Esophagus squamous epithelium (tissue), 5 donors: ENCODE measurements at regions of chr7 and their contacts with region 1.

Region 1: GRCh38 chr7:30406664-30407425 is 71.7 kb downstream of the NOD1 start:
- DNase-seq: no peak
- H3K4me3 ChIP-seq: no peak overlapping the region
- H3K27ac ChIP-seq: peak overlapping the region; percentile 50 to 78 (median 60)
- H3K4me1 ChIP-seq: peaks cover 0 to 28% (median 0%) of the 10 kb centered on the region in 3 donors
- H3K27me3 ChIP-seq: no peaks in the 10 kb centered on the region
- CTCF ChIP-seq: no peak
- POLR2A ChIP-seq: no peak

Region 2: GRCh38 chr7:30285536-30286284 is 121.1 kb before region 1 on chr7:
- intact Hi-C with region 1: loop called (anchors 10 kb)
- DNase-seq: no peak
- H3K4me3 ChIP-seq: peak overlapping the region; percentile 89 to 96 (median 92)
- H3K27ac ChIP-seq: peak overlapping the region; percentile 90 to 100 (median 100)
- H3K4me1 ChIP-seq: peaks cover 5 to 74% (median 28%) of the 10 kb centered on the region in 3 donors
- H3K27me3 ChIP-seq: no peaks in the 10 kb centered on the region
- CTCF ChIP-seq: no peak
- POLR2A ChIP-seq: peak in 1 of 4 donors; percentile 47

Region 3: DNA sequence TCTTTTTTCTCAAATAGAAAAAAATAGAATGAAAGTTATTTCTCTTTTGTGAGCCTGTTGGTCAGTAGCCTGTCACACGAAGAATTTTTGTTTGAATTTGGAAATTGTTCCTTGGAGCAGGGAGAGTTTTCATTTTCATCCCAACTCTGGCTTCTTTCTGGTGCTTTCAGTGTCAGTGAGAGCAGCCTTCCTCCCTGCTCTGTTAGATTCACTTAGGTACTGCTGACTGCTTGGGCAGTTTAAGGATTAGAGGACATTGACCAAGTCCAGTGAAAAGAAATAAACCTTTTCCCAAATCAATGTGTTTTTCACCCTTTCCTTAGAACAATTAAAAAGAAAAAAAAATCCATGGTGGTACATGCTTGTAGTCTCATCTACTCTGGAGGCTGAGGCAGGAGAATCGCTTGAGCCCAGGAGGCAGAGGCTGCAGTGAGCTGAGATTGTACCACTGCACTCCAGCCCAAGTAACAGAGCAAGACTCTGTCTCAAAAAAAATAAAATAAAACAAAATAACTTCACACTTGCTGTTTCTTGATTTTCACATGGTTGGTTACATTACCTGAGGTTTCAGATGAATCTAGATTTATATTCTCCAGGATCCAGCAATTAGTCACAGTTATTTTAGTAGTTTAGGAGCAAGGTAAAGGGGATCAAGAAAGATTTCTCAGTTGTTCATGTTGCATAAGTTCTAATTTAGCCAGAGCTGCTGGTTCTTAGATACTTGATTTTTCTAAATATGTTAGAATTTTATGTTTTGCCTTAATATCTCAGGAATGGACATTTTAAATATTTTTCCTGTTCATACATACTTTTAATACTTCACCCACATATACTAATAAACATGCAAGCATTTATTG is 59.4 kb before region 1 on chr7:
- intact Hi-C with region 1: no loop called
- DNase-seq: no peak
- H3K4me3 ChIP-seq: no peak overlapping the region
- H3K27ac ChIP-seq: peak overlapping the region in 3 of 4 donors; percentile 12 to 71 (median 70)
- H3K4me1 ChIP-seq: peaks cover 5 to 68% (median 14%) of the 10 kb centered on the region in 3 donors
- H3K27me3 ChIP-seq: no peaks in the 10 kb centered on the region
- CTCF ChIP-seq: no peak
- POLR2A ChIP-seq: no peak

Region 4: GRCh38 chr7:31327071-31327470 is 920.2 kb after region 1 on chr7:
- intact Hi-C with region 1: no loop called
- DNase-seq: no peak
- H3K4me3 ChIP-seq: no peak overlapping the region
- H3K27ac ChIP-seq: no peak overlapping the region
- H3K4me1 ChIP-seq: no peaks in the 10 kb centered on the region
- H3K27me3 ChIP-seq: no peaks in the 10 kb centered on the region
- CTCF ChIP-seq: no peak
- POLR2A ChIP-seq: no peak